Sigmoid colon (tissue), 7 donors: ENCODE measurements at regions of chr9 and their contacts with region 1.

Region 1: GRCh38 chr9:15211160-15211814 is 95.7 kb downstream of the TTC39B start:
- DNase-seq: peak; percentile 80
- H3K4me3 ChIP-seq: no peak overlapping the region
- H3K27ac ChIP-seq: peak overlapping the region; percentile 25 to 43 (median 28)
- H3K4me1 ChIP-seq: peaks cover 0 to 14% (median 4%) of the 10 kb centered on the region in 4 donors
- H3K27me3 ChIP-seq: no peaks in the 10 kb centered on the region
- CTCF ChIP-seq: peak; percentile 37 to 93 (median 85)
- EP300 ChIP-seq: peak in 1 of 4 donors; percentile 72
- POLR2A ChIP-seq: no peak

Region 2: GRCh38 chr9:15306757-15307534 is 95.7 kb after region 1 on chr9 and contains the start of gene TTC39B:
- intact Hi-C with region 1: loop called (anchors 2 kb)
- DNase-seq: peak; percentile 96
- H3K4me3 ChIP-seq: peak within 1 kb of the TSS; percentile 91 to 97 (median 92)
- H3K27ac ChIP-seq: peak within 1 kb of the TSS; percentile 93 to 94 (median 93)
- H3K4me1 ChIP-seq: peaks cover 0 to 20% (median 4%) of the 10 kb centered on the region in 4 donors
- H3K27me3 ChIP-seq: no peaks in the 10 kb centered on the region
- CTCF ChIP-seq: no peak
- EP300 ChIP-seq: no peak
- POLR2A ChIP-seq: peak; percentile 80 to 84
- total RNA-seq, gene TTC39B: 9.1 to 15.8 (median 13.8) TPM

Region 3: DNA sequence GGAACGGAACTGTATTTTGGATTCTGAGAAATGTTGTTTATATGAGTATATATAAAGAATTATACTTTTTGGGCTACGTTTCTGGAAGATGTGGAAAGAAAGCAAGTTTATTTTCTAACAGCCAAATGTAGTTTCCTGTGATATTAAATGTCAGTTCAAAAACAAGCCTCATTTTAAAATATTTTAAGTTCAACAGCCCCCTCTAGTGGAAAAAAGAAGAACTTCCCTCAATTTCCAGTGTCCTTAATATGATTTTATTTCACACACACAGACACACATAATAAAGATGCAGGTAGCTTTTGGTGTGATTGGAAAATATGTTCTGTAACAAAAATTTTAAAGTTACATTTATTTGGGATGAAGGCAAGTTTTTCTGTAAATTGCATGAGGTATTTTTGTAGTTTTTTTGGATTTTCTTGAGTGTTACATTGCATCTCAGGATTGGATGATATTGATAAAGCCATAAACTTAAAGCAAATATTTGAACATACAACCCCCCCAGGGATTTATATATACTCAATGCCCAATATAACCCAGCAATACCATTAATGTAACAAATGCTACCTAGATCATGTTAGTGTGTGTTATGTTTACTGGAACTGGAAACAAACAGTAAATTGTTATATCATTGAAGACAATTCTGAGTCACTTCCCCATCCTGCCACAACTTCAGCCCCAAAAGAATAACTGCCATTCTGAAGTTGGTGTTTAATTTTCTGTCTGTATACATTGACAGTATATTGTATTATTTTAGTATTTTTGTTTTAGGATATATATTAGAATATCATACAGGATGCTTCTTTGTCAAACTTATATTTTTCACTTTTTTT is 395.6 kb after region 1 on chr9:
- intact Hi-C with region 1: loop called (anchors 2 kb)
- DNase-seq: no peak
- H3K4me3 ChIP-seq: no peak overlapping the region
- H3K27ac ChIP-seq: no peak overlapping the region
- H3K4me1 ChIP-seq: peaks cover 0 to 3% (median 0%) of the 10 kb centered on the region in 4 donors
- H3K27me3 ChIP-seq: no peaks in the 10 kb centered on the region
- CTCF ChIP-seq: peak in 3 of 4 experiments; percentile 56 to 84 (median 56)
- EP300 ChIP-seq: no peak
- POLR2A ChIP-seq: no peak